ENCODE measurements at regions of chr11 and their contacts with region 1.

Region 1: DNA sequence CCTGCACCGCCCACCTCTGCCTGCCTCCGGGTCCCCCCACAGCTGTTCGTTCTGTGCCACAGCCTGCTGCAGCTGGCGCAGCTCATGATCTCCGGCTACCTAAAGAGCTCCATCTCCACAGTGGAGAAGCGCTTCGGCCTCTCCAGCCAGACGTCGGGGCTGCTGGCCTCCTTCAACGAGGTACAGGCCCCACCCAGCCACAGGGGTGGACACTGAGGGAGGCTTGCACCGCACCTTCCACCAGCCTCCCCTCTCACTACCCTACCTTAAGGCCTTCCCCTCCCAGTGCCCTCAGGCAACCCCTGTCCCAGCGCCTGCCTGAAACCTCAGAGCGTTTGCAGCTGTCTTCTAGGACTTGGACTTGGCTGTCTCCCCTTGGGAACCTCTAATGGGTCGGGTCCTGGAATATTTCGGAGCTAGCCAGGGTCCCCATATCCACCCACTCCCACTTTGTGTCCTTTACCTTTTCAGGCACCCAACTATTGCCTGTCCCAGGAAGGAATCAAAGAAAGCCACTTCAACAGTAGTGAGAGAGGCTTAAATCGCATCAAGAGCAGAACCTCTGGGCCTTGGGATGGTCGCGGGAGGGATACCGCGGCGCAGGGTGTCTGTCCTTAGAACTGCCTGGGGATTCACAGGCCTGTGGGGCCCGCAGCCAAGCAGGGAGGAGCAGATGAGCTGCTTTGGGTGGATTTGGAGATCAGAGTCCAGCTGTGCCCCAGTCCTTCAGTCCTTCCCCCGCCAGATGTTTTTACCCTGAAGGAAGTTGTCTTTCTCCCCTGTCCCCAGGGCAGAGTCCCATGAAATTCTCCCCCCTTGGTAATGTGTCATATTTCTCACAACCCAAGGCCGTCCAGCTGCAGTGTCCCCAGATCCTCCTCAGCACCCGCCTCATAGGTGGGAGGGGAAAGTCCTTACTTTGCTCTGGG is 13.3 kb downstream of the SLCO2B1 start:
- DNase-seq: no peak
- H3K4me3 ChIP-seq: no peak overlapping the region
- H3K27ac ChIP-seq: no peak overlapping the region
- H3K4me1 ChIP-seq: no peaks in the 10 kb centered on the region
- H3K27me3 ChIP-seq: no peaks in the 10 kb centered on the region
- CTCF ChIP-seq: no peak
- POLR2A ChIP-seq: no peak

Region 2: DNA sequence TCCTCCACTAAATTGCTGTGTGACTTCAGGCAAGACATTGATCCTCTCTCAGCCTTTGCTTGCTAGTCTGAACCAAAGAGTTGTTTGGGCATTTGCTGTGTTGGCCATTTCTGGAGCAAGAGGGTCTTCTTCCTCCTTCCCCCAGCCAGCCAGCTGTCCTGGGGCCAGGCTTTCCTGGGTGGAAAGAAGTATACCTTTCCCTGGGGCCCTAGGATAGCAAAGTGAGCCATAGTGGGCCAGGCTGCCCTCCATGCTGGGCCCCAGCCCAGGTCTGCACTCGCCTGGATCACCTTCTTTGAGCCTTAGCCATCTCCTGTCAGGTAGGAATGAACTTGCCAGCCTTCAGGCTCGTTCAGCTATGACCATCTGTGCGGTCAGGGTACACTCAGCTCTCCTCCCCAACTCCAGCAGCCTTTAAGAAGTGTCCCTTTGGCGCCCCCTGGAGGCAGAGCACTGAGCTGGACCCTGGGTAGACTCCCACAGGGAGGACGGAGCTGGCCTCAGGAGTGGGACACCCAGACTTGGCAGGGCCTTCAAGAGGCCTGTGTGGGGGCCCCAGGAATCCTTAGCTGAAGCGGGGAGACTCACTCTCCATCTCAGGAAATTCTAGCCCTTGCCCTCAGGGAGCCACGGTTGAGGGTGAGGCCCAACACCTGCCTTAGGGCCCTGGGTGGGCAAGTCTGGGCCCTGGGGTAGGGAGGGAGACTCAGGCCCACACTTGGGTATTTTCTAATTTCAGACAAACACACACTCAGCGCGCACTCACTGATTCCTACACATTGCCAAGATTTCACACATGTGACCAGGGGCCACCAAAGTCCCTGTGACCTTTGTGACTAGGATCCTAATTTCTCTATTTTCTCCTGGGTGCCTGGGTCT is 40.7 kb after region 1 on chr11:
- intact Hi-C with region 1: no loop called
- DNase-seq: peak; percentile 59 to 73
- H3K4me3 ChIP-seq: no peak overlapping the region
- H3K27ac ChIP-seq: no peak overlapping the region
- H3K4me1 ChIP-seq: no peaks in the 10 kb centered on the region
- H3K27me3 ChIP-seq: no peaks in the 10 kb centered on the region
- CTCF ChIP-seq: peak; percentile 64 to 75 (median 65)
- POLR2A ChIP-seq: no peak

Region 3: GRCh38 chr11:75320046-75320618 is 155.9 kb after region 1 on chr11:
- intact Hi-C with region 1: loop called (anchors 2 kb)
- DNase-seq: no peak
- H3K4me3 ChIP-seq: no peak overlapping the region
- H3K27ac ChIP-seq: peak overlapping the region; percentile 61 to 84
- H3K4me1 ChIP-seq: peaks cover 11 to 18% of the 10 kb centered on the region in 2 donors
- H3K27me3 ChIP-seq: no peaks in the 10 kb centered on the region
- CTCF ChIP-seq: no peak
- POLR2A ChIP-seq: no peak

Region 4: GRCh38 chr11:76455331-76455730 is 1291.1 kb after region 1 on chr11:
- intact Hi-C with region 1: no loop called
- DNase-seq: no peak
- H3K4me3 ChIP-seq: no peak overlapping the region
- H3K27ac ChIP-seq: no peak overlapping the region
- H3K4me1 ChIP-seq: no peaks in the 10 kb centered on the region
- H3K27me3 ChIP-seq: no peaks in the 10 kb centered on the region
- CTCF ChIP-seq: no peak
- POLR2A ChIP-seq: no peak